ENCODE measurements at regions of chr2 and their contacts with region 1.

Region 1: DNA sequence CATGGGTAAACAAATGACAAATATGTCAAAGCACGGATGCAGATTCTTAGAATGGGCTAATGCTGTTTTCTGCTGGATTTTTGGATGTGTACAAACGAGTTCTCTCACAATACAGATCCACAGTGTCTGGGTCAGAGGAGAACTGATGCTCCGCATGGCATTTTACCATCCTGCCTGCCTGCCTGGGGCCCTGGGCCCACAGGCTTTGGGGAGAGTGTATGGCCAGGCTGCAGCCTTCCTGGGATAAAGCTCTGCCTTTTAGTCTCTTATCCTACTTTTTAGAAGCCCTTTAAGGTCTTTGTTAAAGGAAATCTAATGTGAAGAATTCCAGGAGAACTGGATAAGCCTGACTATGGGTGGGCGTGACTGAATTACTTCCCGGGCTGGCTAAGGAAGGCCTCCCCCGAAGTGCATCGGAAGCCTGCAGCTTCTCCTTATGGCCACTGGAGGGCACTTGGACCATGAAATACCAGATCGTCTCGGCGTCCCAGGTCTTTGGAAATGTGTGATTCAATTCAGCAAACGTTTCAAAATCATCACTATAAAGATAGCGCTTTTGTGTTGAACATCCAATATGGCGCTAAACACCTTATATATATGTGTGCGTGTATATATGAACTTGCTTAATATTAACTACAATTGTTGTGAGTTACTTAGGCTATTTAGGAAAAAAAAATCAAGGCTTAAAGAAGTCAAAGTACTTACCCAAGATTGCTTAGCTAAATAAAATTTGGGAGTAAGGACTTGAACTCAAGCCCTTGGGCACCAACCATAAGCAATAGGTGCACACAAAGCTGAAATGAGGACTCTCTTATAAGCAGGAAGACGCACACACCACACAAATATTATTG is 15.2 kb upstream of the DNPEP start:
- DNase-seq: peak; percentile 66
- H3K4me3 Mint-ChIP-seq: no peak overlapping the region
- H3K27ac Mint-ChIP-seq: no peak overlapping the region
- H3K4me1 Mint-ChIP-seq: peaks cover 17% of the 10 kb centered on the region
- H3K27me3 Mint-ChIP-seq: peaks cover 10% of the 10 kb centered on the region
- CTCF ChIP-seq: peak; percentile 79

Region 2: GRCh38 chr2:219430633-219431615 is 28.0 kb after region 1 on chr2:
- CTCF ChIA-PET with region 1: interaction called, 3 read pairs
- intact Hi-C with region 1: loop called (anchors 1 kb)
- DNase-seq: peak; percentile 40
- H3K4me3 Mint-ChIP-seq: no peak overlapping the region
- H3K27ac Mint-ChIP-seq: no peak overlapping the region
- H3K4me1 Mint-ChIP-seq: no peaks in the 10 kb centered on the region
- H3K27me3 Mint-ChIP-seq: peaks cover 19% of the 10 kb centered on the region
- CTCF ChIP-seq: no peak

Region 3: DNA sequence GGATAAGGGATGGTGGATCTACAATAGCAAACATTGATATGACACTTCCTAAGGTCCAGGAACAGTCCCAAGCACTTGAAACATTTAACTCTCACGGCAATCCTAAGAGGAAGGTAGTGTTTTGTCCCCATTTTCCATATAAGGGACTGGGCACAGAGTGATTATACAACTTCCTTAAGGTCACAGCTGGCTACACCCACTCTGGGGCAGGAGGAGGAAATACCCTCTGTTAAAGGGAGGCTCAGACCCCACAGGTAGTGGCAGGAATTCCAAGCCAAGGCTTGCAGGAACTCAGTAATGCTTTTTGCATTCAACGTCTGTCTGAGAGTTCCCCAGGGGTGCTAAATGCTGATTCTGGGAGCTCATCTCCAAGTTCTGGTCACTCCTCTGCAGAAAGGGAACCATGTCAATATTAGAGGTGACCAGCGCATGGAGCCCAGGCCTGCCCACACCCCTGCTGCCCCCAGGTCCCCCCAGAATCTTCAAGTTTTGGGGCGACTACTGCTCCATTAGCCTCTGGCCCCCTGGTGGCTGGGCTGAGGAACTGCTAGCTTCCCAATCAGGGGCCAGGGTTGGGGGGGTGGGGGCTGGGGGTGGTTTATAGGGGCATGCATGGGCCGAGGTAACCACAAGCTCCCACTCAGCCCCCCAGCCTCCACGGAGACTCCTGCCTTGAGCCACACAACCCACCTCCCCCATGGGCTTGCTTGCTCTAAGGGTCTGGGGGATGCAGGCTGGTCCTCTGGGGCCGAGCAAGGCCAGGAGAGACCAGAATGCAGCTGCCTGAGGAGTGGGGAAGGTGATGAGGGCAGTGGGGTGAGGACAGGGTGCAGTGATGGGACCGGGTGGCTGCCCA is 157.4 kb after region 1 on chr2:
- CTCF ChIA-PET with region 1: no interaction called
- intact Hi-C with region 1: no loop called
- DNase-seq: peak; percentile 30
- H3K4me3 Mint-ChIP-seq: no peak overlapping the region
- H3K27ac Mint-ChIP-seq: no peak overlapping the region
- H3K4me1 Mint-ChIP-seq: no peaks in the 10 kb centered on the region
- H3K27me3 Mint-ChIP-seq: no peaks in the 10 kb centered on the region
- CTCF ChIP-seq: peak; percentile 96

Measured in Calu3 (cell line).